Activated CD8-positive, alpha-beta T cell treated with anti-CD3 and anti-CD28 coated beads, Interleukin-2, amount 10 ng/mL, durations not matched to agents 7 days and 5 days (primary cell): ENCODE measurements at regions of chr2 and their contacts with region 1.

Region 1: GRCh38 chr2:8544786-8545694 is 136.8 kb upstream of the ID2 start:
- DNase-seq: peak; percentile 94
- ATAC-seq: peak; percentile 90
- H3K4me3 Mint-ChIP-seq: peak overlapping the region; percentile 40
- H3K27ac Mint-ChIP-seq: peak overlapping the region; percentile 97
- H3K4me1 Mint-ChIP-seq: peaks cover 84% of the 10 kb centered on the region
- H3K27me3 Mint-ChIP-seq: no peaks in the 10 kb centered on the region

Region 2: GRCh38 chr2:8300216-8300615 is 244.8 kb before region 1 on chr2:
- CTCF ChIA-PET with region 1: interaction called, 13 read pairs
- POLR2A ChIA-PET with region 1: interaction called, 3 read pairs
- DNase-seq: peak; percentile 28
- ATAC-seq: no peak
- H3K4me3 Mint-ChIP-seq: no peak overlapping the region
- H3K27ac Mint-ChIP-seq: peak overlapping the region; percentile 6
- H3K4me1 Mint-ChIP-seq: peaks cover 80% of the 10 kb centered on the region
- H3K27me3 Mint-ChIP-seq: peaks cover 1% of the 10 kb centered on the region

Region 3: DNA sequence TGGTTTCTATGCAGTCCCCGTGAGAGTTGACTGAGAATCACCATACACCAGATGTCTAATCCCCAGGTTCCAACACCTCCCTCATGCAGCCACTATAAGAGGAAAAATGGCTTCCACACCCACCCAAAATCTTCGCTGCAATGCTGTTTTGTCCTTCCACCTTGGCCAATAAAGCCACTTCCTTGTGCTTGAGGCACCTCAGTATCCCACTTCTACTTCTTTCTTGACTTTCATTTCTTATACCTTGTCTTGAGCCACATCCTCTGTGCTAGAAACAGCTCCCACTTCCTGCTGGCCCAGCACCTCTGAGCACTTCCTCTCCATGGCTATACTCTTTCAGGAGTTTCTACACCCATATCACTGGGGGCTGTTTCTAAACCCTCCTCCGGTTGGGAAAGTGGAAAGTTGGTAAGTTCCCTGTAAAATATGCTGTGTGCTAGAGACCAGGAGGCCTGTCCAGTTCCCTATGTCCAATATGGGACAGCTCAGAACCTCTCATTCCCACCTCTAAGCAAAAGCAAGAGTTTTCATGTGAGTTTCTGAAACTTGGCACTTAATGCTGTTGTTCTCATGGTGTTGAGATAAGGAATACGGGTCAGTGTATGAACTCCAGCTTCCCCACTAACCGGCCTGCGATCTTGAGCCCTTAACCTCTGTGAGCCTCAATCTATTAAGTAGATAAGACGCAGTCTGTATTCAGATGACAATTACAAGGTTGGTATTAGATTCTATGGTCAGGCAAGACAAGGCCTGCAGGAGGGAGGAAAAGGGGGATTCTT is 72.3 kb before region 1 on chr2:
- CTCF ChIA-PET with region 1: interaction called, 12 read pairs
- POLR2A ChIA-PET with region 1: interaction called, 7 read pairs
- DNase-seq: peak; percentile 68
- ATAC-seq: peak; percentile 85
- H3K4me3 Mint-ChIP-seq: peak overlapping the region; percentile 35
- H3K27ac Mint-ChIP-seq: peak overlapping the region; percentile 89
- H3K4me1 Mint-ChIP-seq: peaks cover 92% of the 10 kb centered on the region
- H3K27me3 Mint-ChIP-seq: no peaks in the 10 kb centered on the region

Region 4: GRCh38 chr2:8488001-8488738 is 56.9 kb before region 1 on chr2:
- CTCF ChIA-PET with region 1: interaction called, 16 read pairs
- POLR2A ChIA-PET with region 1: interaction called, 7 read pairs
- DNase-seq: peak; percentile 60
- ATAC-seq: peak; percentile 76
- H3K4me3 Mint-ChIP-seq: peak overlapping the region; percentile 68
- H3K27ac Mint-ChIP-seq: peak overlapping the region; percentile 86
- H3K4me1 Mint-ChIP-seq: peaks cover 80% of the 10 kb centered on the region
- H3K27me3 Mint-ChIP-seq: no peaks in the 10 kb centered on the region

Region 5: DNA sequence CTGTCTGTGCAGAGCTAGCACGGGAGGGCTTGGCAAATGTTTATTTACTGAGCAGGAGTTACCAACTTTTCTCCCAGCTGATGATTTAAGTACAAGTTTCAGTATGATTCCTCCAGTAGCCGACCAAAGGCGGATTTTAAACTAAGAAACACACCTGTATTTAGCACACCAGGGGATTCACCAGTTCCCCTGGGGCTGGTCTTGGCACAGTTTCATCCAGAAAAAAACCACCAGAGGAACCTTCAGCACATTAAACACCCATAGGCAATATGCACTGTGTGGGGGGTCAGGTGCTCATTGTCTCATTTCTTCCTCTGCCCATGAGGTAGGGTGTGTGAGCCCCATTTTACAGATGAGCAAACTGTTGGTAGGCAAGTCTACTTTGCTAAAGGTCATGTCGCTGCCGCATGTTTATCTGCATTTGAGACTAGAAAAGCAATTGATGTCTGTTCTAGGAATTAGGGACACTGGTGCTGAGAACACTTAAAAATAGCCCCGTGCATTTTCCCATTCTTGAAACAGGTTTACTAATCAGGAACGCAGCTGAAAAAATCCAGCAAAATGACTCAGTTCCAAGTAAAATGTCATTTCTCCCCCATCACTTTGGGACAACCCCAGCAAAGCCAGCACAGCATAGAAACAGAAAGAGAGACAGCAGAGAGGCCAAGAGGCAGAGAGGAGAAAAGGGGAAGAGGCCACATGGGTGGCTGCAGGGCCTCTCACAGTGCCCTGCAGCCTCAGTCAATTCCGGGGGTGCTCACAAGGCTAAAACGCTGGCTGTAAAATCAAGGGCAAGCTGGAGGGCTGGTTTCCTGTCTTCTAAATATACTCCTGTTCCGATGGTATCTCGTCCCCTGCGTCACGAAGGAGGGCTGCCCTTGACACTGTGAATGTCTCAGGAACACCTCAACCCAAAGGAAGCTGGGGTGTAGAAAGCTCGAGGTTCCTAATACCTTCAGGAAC is 30.0 kb before region 1 on chr2:
- CTCF ChIA-PET with region 1: interaction called, 16 read pairs
- POLR2A ChIA-PET with region 1: interaction called, 17 read pairs
- DNase-seq: peak; percentile 85
- ATAC-seq: peak; percentile 87
- H3K4me3 Mint-ChIP-seq: peak overlapping the region; percentile 50
- H3K27ac Mint-ChIP-seq: peak overlapping the region; percentile 90
- H3K4me1 Mint-ChIP-seq: peaks cover 89% of the 10 kb centered on the region
- H3K27me3 Mint-ChIP-seq: no peaks in the 10 kb centered on the region

Region 6: GRCh38 chr2:8681786-8682692 is 137.0 kb after region 1 on chr2 and contains the start of gene ID2:
- CTCF ChIA-PET with region 1: interaction called, 8 read pairs
- POLR2A ChIA-PET with region 1: interaction called, 73 read pairs
- DNase-seq: peak; percentile 99
- ATAC-seq: peak; percentile 68
- H3K4me3 Mint-ChIP-seq: peak within 1 kb of the TSS; percentile 99
- H3K27ac Mint-ChIP-seq: peak within 1 kb of the TSS; percentile 97
- H3K4me1 Mint-ChIP-seq: peaks cover 39% of the 10 kb centered on the region
- H3K27me3 Mint-ChIP-seq: peaks cover 11% of the 10 kb centered on the region
- total RNA-seq, gene ID2: 257 to 263 TPM